ENCODE measurements at regions of chr7 and their contacts with region 1.

Region 1: GRCh38 chr7:22726345-22727185 is 435 bp upstream of the IL6 start:
- DNase-seq: peak; percentile 86
- H3K4me3 ChIP-seq: peak overlapping the region; percentile 49
- CTCF ChIP-seq: peak; percentile 62

Region 2: DNA sequence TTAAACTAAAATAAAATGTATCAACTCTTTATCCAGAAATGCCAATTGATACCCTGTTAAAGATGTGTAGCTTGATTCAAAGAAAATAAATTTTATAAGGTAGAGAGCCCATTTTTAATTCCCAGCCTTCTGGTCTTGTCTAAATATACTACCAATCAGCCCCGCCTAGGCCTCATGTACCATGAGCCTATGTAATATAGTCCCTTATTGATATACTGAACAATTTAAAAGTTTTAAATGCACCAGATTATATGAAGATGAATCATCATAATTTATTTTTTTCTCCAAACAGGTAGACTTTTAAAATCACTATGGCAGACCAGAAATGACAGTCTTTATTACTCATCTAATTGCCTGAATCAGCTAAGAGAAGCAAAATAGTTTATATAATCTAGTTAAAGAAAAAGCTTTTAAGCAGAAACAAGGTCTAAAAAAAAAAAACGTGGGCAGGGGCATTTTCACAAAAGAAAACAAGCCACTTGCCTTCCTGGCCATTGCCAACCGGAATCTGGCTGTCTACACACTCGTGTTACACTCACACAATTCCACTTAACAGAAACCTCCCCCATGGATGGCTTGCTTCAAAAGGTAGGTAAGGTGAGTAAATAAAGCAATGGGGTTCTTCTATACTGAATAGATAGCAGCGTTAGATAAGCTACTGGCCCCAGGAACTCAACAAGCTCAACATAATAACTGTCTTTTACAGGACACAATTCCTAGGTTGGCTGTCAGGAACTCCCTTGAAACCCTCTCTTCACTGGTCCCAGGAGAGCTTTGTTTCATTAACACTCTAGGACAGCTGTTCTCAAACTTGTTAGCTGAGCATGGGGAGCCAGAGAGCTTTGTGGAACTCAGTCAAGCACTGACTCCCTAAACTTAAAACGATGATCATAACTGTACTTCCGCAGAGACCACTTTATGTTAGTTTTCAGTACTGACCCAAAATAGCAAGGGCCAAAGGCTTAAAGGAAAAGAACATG is 406.9 kb before region 1 on chr7:
- CTCF ChIA-PET with region 1: no interaction called
- POLR2A ChIA-PET with region 1: no interaction called
- DNase-seq: no peak
- H3K4me3 ChIP-seq: no peak overlapping the region
- CTCF ChIP-seq: no peak

Region 3: DNA sequence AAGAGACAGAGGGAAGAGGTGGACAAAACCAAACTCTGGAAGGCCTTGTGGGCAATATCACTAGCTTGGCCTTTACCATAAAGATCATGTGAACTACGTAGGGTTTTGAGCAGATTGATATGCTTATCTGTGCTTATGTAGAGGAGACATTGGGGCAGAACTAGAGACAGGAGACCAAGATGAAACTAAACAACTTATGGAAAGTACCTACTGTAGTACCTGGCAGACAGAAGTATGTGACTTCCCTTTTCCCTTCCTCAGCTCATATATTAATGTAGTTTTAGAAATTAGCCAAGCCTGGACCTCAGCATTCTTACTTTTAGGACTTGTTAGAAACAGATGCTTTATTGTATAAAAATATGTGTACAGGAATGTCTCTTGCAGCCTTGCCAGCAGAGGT is 13.6 kb before region 1 on chr7:
- CTCF ChIA-PET with region 1: interaction called, 17 read pairs
- POLR2A ChIA-PET with region 1: interaction called, 12 read pairs
- DNase-seq: no peak
- H3K4me3 ChIP-seq: no peak overlapping the region
- CTCF ChIP-seq: no peak

Measured in AG04449 (cell line).